ENCODE measurements at regions of chr15 and their contacts with region 1.

Region 1: DNA sequence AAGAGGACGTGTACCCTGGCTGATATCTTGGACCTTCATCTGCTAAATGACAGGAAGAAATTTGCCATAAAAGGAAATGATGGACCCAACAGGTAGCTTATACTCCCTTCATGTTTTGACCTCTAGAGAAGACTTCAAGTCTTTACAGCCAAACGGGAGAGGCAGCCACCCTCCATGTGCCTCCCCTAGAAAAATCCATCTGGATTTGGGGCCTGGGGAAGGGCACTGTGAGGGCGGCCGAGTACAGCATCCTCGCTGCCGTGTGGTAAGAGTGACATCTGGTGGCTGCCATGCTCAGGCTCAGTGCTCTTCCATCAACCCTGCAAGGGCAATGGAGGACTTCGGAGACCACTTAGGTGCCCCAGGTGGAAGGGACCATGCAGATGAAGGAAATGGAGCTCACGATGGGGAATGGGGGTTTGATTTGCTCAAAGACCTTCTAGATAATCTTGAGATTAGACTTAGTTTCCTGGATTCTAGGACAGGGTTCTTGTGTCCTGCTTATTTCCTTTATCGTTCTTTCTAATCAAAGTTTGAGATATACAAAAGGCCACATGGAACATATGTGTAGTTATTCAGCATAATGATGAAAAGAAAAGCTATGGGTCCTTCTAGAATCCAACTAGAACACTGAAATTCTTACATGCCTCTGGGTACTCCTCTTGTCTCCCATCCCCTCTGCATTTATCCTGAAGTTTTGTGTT is 44.4 kb downstream of the AQP9 start:
- DNase-seq: peak; percentile 14
- H3K4me3 ChIP-seq: no peak overlapping the region
- H3K27ac ChIP-seq: no peak overlapping the region
- H3K4me1 ChIP-seq: no peaks in the 10 kb centered on the region
- CTCF ChIP-seq: peak; percentile 73

Region 2: GRCh38 chr15:57961919-57962318 is 220.7 kb before region 1 on chr15:
- CTCF ChIA-PET with region 1: no interaction called
- POLR2A ChIA-PET with region 1: no interaction called
- intact Hi-C with region 1: no loop called
- DNase-seq: no peak
- H3K4me3 ChIP-seq: no peak overlapping the region
- H3K27ac ChIP-seq: no peak overlapping the region
- H3K4me1 ChIP-seq: no peaks in the 10 kb centered on the region
- CTCF ChIP-seq: no peak

Region 3: GRCh38 chr15:58043192-58043903 is 139.3 kb before region 1 on chr15:
- CTCF ChIA-PET with region 1: no interaction called
- POLR2A ChIA-PET with region 1: no interaction called
- intact Hi-C with region 1: loop called (anchors 5 kb)
- DNase-seq: peak; percentile 48
- H3K4me3 ChIP-seq: no peak overlapping the region
- H3K27ac ChIP-seq: no peak overlapping the region
- H3K4me1 ChIP-seq: no peaks in the 10 kb centered on the region
- CTCF ChIP-seq: peak; percentile 93

Measured in OCI-LY7 (cell line).